Activated CD8-positive, alpha-beta memory T cell treated with anti-CD3 and anti-CD28 coated beads, Interleukin-2, amount 10 ng/mL, durations not matched to agents 7 days and 5 days (primary cell): ENCODE measurements at regions of chr1 and their contacts with region 1.

Region 1: GRCh38 chr1:150067184-150068036 is at the start of gene VPS45:
- DNase-seq: peak; percentile 94
- ATAC-seq: peak; percentile 95
- H3K4me3 Mint-ChIP-seq: peak within 1 kb of the TSS; percentile 97
- H3K27ac Mint-ChIP-seq: peak within 1 kb of the TSS; percentile 96
- H3K4me1 Mint-ChIP-seq: peaks cover 37% of the 10 kb centered on the region
- H3K27me3 Mint-ChIP-seq: no peaks in the 10 kb centered on the region
- total RNA-seq, gene VPS45: 34.7 to 35.9 TPM

Region 2: DNA sequence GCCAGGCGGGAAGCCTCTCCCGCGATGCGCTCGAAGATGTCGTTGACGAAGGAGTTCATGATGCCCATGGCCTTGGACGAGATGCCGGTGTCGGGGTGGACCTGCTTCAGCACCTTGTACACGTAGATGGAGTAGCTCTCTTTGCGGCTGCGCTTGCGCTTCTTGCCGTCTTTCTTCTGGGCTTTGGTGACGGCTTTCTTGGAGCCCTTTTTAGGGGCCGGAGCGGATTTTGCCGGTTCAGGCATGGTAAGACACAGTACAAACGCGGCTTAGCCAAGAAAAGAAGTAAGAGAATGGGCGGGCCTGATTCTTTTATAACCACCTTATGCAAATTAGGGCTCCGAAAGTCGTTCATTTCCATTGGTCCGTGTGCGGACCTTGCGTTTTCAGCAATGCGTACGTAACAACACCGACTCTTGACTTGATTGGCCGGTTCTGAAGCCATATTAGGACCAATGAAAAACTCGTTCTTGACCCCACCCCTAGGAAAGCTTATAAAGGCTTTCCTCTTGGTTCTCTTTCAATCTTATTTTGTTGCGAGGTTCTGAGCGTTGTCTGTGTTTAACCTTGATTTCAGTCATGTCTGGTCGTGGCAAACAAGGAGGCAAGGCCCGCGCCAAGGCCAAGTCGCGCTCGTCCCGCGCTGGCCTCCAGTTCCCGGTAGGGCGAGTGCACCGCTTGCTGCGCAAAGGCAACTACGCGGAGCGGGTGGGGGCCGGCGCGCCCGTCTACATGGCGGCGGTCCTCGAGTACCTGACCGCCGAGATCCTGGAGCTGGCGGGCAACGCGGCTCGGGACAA is 180.8 kb before region 1 on chr1:
- CTCF ChIA-PET with region 1: interaction called, 11 read pairs
- DNase-seq: peak; percentile 94
- ATAC-seq: peak; percentile 60
- H3K4me3 Mint-ChIP-seq: no peak overlapping the region
- H3K27ac Mint-ChIP-seq: no peak overlapping the region
- H3K4me1 Mint-ChIP-seq: peaks cover 17% of the 10 kb centered on the region
- H3K27me3 Mint-ChIP-seq: peaks cover 2% of the 10 kb centered on the region

Region 3: GRCh38 chr1:150053926-150054325 is 13.5 kb before region 1 on chr1:
- CTCF ChIA-PET with region 1: interaction called, 14 read pairs
- DNase-seq: no peak
- ATAC-seq: no peak
- H3K4me3 Mint-ChIP-seq: no peak overlapping the region
- H3K27ac Mint-ChIP-seq: no peak overlapping the region
- H3K4me1 Mint-ChIP-seq: peaks cover 8% of the 10 kb centered on the region
- H3K27me3 Mint-ChIP-seq: peaks cover 10% of the 10 kb centered on the region

Region 4: GRCh38 chr1:150162862-150163706 is 95.7 kb after region 1 on chr1:
- CTCF ChIA-PET with region 1: interaction called, 424 read pairs
- DNase-seq: no peak
- ATAC-seq: no peak
- H3K4me3 Mint-ChIP-seq: no peak overlapping the region
- H3K27ac Mint-ChIP-seq: peak overlapping the region; percentile 50
- H3K4me1 Mint-ChIP-seq: peaks cover 68% of the 10 kb centered on the region
- H3K27me3 Mint-ChIP-seq: no peaks in the 10 kb centered on the region